ENCODE measurements at regions of chr2 and their contacts with region 1.

Region 1: GRCh38 chr2:174209325-174209724 is 39.0 kb downstream of the OLA1 start:
- DNase-seq: no peak
- CTCF ChIP-seq: no peak

Region 2: DNA sequence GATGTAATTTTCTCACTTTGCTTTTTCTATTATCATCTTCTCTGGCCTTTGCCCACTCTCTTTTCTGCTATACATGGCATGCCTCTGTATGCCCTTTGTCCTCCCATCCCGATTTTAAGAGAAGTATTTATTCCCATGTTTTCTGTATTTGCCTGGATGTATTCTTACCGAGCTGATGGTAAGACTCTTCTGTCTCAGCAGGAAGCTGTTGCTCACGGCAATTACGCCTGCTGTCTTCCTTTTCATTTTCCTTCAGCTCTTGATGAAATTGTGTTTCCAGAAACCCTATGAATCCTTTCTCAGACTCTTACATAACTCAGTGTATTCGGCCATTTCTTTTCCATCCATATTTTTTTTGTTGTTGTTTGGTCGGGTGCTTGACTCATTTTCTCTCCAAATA is 365.8 kb before region 1 on chr2:
- CTCF ChIA-PET with region 1: no interaction called
- POLR2A ChIA-PET with region 1: no interaction called
- DNase-seq: no peak
- CTCF ChIP-seq: no peak

Region 3: GRCh38 chr2:174078275-174078674 is 131.1 kb before region 1 on chr2:
- CTCF ChIA-PET with region 1: no interaction called
- POLR2A ChIA-PET with region 1: no interaction called
- DNase-seq: no peak
- CTCF ChIP-seq: peak; percentile 21

Region 4: DNA sequence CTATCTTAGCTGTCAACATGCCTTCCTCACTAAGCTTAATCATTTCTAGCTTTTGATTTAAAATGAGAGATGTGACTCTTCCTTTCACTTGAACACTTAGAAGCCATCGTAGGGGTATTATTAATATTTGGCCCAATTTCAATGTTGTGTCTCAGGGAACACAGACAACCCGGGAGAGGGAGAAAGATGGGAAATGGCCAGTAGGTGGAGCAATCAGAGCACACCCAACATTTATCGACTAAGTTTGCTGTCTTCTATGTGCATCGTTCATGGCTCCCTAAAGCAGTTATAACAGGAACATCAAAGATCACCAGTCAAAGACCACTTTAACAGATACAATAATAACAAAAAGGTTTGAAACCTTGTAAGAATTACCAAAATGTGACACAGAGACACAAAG is 71.2 kb before region 1 on chr2:
- CTCF ChIA-PET with region 1: no interaction called
- POLR2A ChIA-PET with region 1: no interaction called
- DNase-seq: no peak
- CTCF ChIP-seq: no peak

Region 5: DNA sequence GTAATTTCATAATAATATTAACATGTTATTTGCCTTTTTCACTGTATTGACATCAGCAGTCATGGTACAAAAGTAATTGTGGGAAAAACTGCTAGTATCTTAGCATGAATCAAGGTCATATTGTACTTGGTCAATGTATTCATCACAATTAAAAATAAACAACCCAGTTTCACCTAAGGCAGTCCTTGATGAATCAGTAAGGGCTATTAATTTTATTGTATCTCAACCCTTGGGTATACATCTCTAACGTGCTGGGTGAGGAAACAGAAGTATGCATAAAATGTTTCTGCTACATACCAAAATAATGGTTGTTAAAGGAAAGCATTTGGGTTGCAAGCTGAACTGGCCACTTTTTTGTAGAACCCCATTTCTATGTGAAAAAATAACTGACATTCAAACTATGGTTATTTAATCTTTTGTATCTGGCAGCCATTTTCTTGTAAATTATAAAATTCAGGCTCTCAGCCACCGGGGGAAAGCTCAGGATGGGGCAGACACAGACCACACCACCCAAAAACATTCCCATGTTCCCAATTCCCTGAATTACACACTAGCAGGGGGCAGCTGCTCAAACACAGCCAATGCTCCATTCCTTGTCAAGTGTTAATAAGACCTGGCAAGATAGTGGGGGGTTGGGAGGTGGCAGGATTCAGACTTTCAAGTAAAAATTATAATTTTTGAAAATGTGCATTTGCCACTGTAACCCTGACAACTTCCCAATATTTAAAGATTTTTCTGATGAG is 10.3 kb before region 1 on chr2:
- CTCF ChIA-PET with region 1: interaction called, 11 read pairs
- POLR2A ChIA-PET with region 1: no interaction called
- DNase-seq: no peak
- CTCF ChIP-seq: no peak

Region 6: DNA sequence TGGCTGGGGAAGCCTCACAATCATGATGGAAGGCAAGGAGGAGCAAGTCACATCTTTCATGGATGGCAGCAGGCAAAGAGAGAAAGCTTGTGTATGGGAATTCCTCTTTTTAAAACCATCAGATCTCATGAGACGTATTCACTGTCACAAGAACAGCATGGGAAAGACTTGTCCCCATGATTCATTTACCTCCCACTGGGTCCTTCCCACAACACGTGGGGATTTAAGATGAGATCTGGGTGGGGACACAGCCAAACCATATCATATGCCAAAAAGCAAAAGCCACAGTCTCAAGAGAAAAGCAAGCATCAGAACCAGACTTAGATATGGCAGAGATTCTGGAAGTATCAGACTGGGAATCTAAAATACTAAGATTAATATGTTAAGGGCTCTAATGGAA is 156.2 kb after region 1 on chr2:
- CTCF ChIA-PET with region 1: no interaction called
- POLR2A ChIA-PET with region 1: no interaction called
- DNase-seq: no peak
- CTCF ChIP-seq: no peak